K562 (cell line): ENCODE measurements at regions of chr22 and their contacts with region 1.

Region 1: GRCh38 chr22:17980638-17981051 is 43.7 kb downstream of the MICAL3 start:
- DNase-seq: peak; percentile 90 to 96 (median 92)
- ATAC-seq: peak; percentile 92
- H3K4me3 ChIP-seq: no peak overlapping the region; the same call in 1 of the 2 replicates
- H3K27ac ChIP-seq: peak overlapping the region; percentile 44; the same call in 2 of the 3 replicates
- H3K4me1 ChIP-seq: peaks cover 35 to 37% of the 10 kb centered on the region in 2 experiments
- H3K27me3 ChIP-seq: no peaks in the 10 kb centered on the region
- CTCF ChIP-seq: no peak
- EP300 ChIP-seq: peak; percentile 96
- POLR2A ChIP-seq: no peak
- RAD21 ChIP-seq: no peak; a peak in 1 of 4 replicates

Region 2: GRCh38 chr22:17672417-17672991 is 308.1 kb before region 1 on chr22:
- CTCF ChIA-PET with region 1: no interaction called
- POLR2A ChIA-PET with region 1: no interaction called
- in situ Hi-C with region 1: no loop called
- intact Hi-C with region 1: no loop called
- DNase-seq: peak in 1 of 4 experiments; percentile 10
- ATAC-seq: peak; percentile 29
- H3K4me3 ChIP-seq: no peak overlapping the region
- H3K27ac ChIP-seq: peak overlapping the region; percentile 71
- H3K4me1 ChIP-seq: peaks cover 9 to 23% of the 10 kb centered on the region in 2 experiments; a peak in 4 of 5 replicates
- H3K27me3 ChIP-seq: no peaks in the 10 kb centered on the region
- CTCF ChIP-seq: no peak
- EP300 ChIP-seq: 0 out of 2 replicates have a peak, but pooled peaks have one; percentile 0
- POLR2A ChIP-seq: no peak
- RAD21 ChIP-seq: no peak

Region 3: GRCh38 chr22:17969701-17970113 is 10.9 kb before region 1 on chr22:
- CTCF ChIA-PET with region 1: no interaction called
- POLR2A ChIA-PET with region 1: interaction called, 11 read pairs
- in situ Hi-C with region 1: no loop called
- intact Hi-C with region 1: no loop called
- DNase-seq: no peak
- ATAC-seq: peak; percentile 13
- H3K4me3 ChIP-seq: no peak overlapping the region
- H3K27ac ChIP-seq: no peak overlapping the region
- H3K4me1 ChIP-seq: peaks cover 20 to 22% of the 10 kb centered on the region in 2 experiments
- H3K27me3 ChIP-seq: no peaks in the 10 kb centered on the region
- CTCF ChIP-seq: no peak
- EP300 ChIP-seq: no peak
- POLR2A ChIP-seq: no peak
- RAD21 ChIP-seq: no peak